CD8-positive, alpha-beta memory T cell (primary cell): ENCODE measurements at regions of chr4 and their contacts with region 1.

Region 1: GRCh38 chr4:80184053-80184790 is 13.1 kb upstream of the PRDM8 start:
- DNase-seq: peak; percentile 87 to 93 (median 89)
- H3K4me3 ChIP-seq: peak overlapping the region; percentile 97
- H3K4me3 Mint-ChIP-seq: peak overlapping the region; percentile 96 to 100 (median 99)
- H3K27ac ChIP-seq: peak overlapping the region; percentile 83
- H3K27ac Mint-ChIP-seq: peak overlapping the region; percentile 87 to 98 (median 98)
- H3K4me1 ChIP-seq: peaks cover 36% of the 10 kb centered on the region
- H3K4me1 Mint-ChIP-seq: peaks cover 58 to 64% (median 59%) of the 10 kb centered on the region in 3 donors
- H3K27me3 ChIP-seq: no peaks in the 10 kb centered on the region
- H3K27me3 Mint-ChIP-seq: peaks cover 0 to 7% of the 10 kb centered on the region in 2 donors

Region 2: GRCh38 chr4:80072744-80073472 is 111.3 kb before region 1 on chr4 and contains the start of gene ANTXR2:
- CTCF ChIA-PET with region 1: interaction called, 11 read pairs
- POLR2A ChIA-PET with region 1: interaction called, 20 read pairs
- DNase-seq: peak; percentile 53 to 76 (median 58)
- H3K4me3 ChIP-seq: peak within 1 kb of the TSS; percentile 81
- H3K4me3 Mint-ChIP-seq: peak within 1 kb of the TSS; percentile 93 to 99 (median 97)
- H3K27ac ChIP-seq: peak within 1 kb of the TSS; percentile 92
- H3K27ac Mint-ChIP-seq: peak within 1 kb of the TSS; percentile 91 to 97 (median 96)
- H3K4me1 ChIP-seq: peaks cover 47% of the 10 kb centered on the region
- H3K4me1 Mint-ChIP-seq: peaks cover 53 to 86% (median 66%) of the 10 kb centered on the region in 3 donors
- H3K27me3 ChIP-seq: no peaks in the 10 kb centered on the region
- H3K27me3 Mint-ChIP-seq: no peaks in the 10 kb centered on the region
- total RNA-seq, gene ANTXR2: 18.2 to 20.6 TPM

Region 3: GRCh38 chr4:80138551-80139538 is 45.4 kb before region 1 on chr4:
- CTCF ChIA-PET with region 1: interaction called, 28 read pairs
- POLR2A ChIA-PET with region 1: interaction called, 7 read pairs
- DNase-seq: peak; percentile 7 to 72 (median 51)
- H3K4me3 ChIP-seq: no peak overlapping the region
- H3K4me3 Mint-ChIP-seq: peak overlapping the region in 6 of 7 donors; percentile 1 to 55 (median 6)
- H3K27ac ChIP-seq: peak overlapping the region; percentile 18
- H3K27ac Mint-ChIP-seq: peak overlapping the region; percentile 62 to 91 (median 79)
- H3K4me1 ChIP-seq: peaks cover 37% of the 10 kb centered on the region
- H3K4me1 Mint-ChIP-seq: peaks cover 26 to 54% (median 49%) of the 10 kb centered on the region in 3 donors
- H3K27me3 ChIP-seq: no peaks in the 10 kb centered on the region
- H3K27me3 Mint-ChIP-seq: no peaks in the 10 kb centered on the region

Region 4: DNA sequence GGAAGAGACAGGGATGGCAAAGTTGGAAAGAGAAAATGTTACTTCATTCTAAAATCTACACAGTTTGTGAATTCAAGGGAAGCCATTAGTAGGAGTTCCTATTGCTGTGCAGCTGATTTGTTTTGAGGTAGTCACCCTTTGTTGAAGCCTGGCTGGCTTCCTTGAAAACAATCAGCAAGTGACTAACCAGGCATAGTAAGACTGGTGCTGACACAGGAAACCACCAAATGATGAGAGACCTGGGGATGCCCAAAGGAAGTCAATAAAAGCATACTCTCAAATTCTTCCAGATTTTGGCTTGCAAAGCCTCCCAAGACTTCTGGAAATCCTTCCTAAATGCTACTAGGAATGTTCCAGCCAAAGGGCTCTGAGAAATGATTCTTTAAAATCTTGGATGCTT is 10.8 kb before region 1 on chr4:
- CTCF ChIA-PET with region 1: interaction called, 61 read pairs
- POLR2A ChIA-PET with region 1: interaction called, 22 read pairs
- DNase-seq: peak in 4 of 5 donors; percentile 39 to 72 (median 66)
- H3K4me3 ChIP-seq: peak overlapping the region; percentile 2
- H3K4me3 Mint-ChIP-seq: peak overlapping the region; percentile 47 to 82 (median 71)
- H3K27ac ChIP-seq: no peak overlapping the region
- H3K27ac Mint-ChIP-seq: peak overlapping the region; percentile 83 to 98 (median 94)
- H3K4me1 ChIP-seq: peaks cover 43% of the 10 kb centered on the region
- H3K4me1 Mint-ChIP-seq: peaks cover 48 to 67% (median 55%) of the 10 kb centered on the region in 3 donors
- H3K27me3 ChIP-seq: no peaks in the 10 kb centered on the region
- H3K27me3 Mint-ChIP-seq: no peaks in the 10 kb centered on the region

Region 5: DNA sequence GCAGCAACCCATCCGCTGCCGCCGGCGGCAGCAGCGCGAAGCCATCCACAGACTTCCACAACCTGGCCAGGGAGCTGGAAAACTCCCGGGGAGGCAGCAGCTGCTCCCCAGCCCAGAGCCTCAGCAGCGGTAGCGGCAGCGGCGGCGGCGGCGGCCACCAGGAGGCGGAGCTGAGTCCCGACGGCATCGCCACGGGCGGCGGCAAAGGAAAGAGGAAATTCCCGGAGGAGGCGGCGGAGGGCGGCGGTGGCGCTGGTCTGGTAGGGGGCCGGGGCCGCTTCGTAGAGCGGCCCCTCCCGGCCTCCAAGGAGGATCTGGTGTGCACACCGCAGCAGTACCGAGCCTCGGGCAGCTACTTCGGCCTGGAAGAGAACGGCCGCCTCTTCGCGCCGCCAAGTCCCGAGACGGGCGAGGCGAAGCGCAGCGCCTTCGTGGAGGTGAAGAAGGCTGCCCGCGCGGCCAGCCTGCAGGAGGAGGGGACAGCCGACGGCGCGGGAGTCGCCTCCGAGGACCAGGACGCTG is 18.0 kb after region 1 on chr4:
- CTCF ChIA-PET with region 1: interaction called, 194 read pairs
- POLR2A ChIA-PET with region 1: interaction called, 12 read pairs
- DNase-seq: peak; percentile 68 to 84 (median 77)
- H3K4me3 ChIP-seq: peak overlapping the region; percentile 42
- H3K4me3 Mint-ChIP-seq: peak overlapping the region; percentile 86 to 97 (median 87)
- H3K27ac ChIP-seq: peak overlapping the region; percentile 67
- H3K27ac Mint-ChIP-seq: peak overlapping the region; percentile 74 to 95 (median 94)
- H3K4me1 ChIP-seq: peaks cover 12% of the 10 kb centered on the region
- H3K4me1 Mint-ChIP-seq: peaks cover 27 to 36% (median 27%) of the 10 kb centered on the region in 3 donors
- H3K27me3 ChIP-seq: no peaks in the 10 kb centered on the region
- H3K27me3 Mint-ChIP-seq: peaks cover 0 to 7% of the 10 kb centered on the region in 2 donors

Region 6: DNA sequence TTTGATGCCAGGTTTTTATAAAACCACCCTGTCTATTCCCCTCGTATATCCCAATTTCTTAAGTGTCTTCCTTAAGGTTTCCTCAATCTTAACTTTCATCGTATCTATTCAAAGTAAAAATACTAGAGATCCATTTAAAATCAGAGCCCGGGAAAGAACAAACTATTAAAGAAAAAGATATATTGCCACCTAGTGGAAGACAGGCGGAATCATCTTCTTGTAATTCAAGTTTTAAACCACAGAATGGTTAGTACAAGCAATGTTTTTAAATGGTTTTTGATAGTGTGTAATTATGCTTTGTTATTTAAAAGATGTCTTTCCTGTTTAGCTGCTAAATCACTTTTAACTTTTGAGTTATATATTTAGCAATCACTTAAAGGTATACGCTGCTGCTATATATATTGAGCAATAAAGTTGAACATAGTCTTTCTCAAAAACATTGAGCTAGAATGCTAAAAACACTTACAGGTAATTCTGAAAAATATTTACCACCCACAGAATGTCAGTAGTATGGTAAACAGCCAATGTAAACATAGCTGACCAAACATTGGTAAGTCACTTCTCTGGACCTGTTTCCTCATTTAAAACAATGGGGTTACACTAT is 31.3 kb after region 1 on chr4:
- CTCF ChIA-PET with region 1: interaction called, 19 read pairs
- POLR2A ChIA-PET with region 1: no interaction called
- DNase-seq: peak in 2 of 5 donors; percentile 38 to 41
- H3K4me3 ChIP-seq: no peak overlapping the region
- H3K4me3 Mint-ChIP-seq: no peak overlapping the region
- H3K27ac ChIP-seq: no peak overlapping the region
- H3K27ac Mint-ChIP-seq: no peak overlapping the region
- H3K4me1 ChIP-seq: no peaks in the 10 kb centered on the region
- H3K4me1 Mint-ChIP-seq: peaks cover 0 to 2% (median 0%) of the 10 kb centered on the region in 3 donors
- H3K27me3 ChIP-seq: no peaks in the 10 kb centered on the region
- H3K27me3 Mint-ChIP-seq: peaks cover 13 to 52% of the 10 kb centered on the region in 2 donors

Region 7: GRCh38 chr4:80229590-80229989 is 45.4 kb after region 1 on chr4:
- CTCF ChIA-PET with region 1: no interaction called
- POLR2A ChIA-PET with region 1: no interaction called
- DNase-seq: no peak
- H3K4me3 ChIP-seq: no peak overlapping the region
- H3K4me3 Mint-ChIP-seq: no peak overlapping the region
- H3K27ac ChIP-seq: no peak overlapping the region
- H3K27ac Mint-ChIP-seq: no peak overlapping the region
- H3K4me1 ChIP-seq: no peaks in the 10 kb centered on the region
- H3K4me1 Mint-ChIP-seq: peaks cover 0 to 3% (median 0%) of the 10 kb centered on the region in 3 donors
- H3K27me3 ChIP-seq: peaks cover 7% of the 10 kb centered on the region
- H3K27me3 Mint-ChIP-seq: peaks cover 2 to 33% of the 10 kb centered on the region in 2 donors